B cell (primary cell): ENCODE measurements at regions of chr5 and their contacts with region 1.

Region 1: DNA sequence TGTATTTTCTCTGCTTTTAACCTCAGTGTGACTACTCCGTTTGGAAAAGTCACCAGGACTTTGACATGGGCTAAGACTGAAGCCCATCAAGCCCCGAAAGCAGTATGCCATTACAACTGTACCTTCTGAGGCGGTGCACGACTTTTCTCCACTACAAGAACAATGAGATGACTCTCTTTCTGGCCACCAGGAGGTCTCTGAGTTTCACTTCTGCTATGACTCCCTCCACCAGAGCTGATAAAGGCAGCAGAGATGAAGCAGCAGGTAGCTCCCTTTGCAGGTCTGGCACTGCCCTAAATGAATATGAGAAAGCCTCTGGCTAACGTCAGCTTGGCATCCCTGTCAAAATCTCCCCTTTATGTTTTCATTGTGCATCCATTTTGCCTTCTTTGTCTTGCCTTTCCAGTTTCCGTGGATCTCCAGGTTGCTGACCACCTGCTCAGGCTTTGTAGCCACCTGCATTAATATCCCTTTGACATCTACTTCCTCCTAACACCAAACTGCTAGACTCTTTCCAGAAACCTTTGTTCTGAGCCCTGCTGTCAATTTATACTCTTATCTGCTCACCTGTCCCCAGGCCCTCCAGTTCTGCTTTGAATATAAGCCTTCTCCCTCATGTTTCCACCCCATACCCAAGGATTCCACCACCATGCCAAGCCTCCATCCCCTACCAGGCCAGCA is 221.7 kb downstream of the ZNF608 start:
- DNase-seq: peak; percentile 83
- ATAC-seq: peak; percentile 95
- H3K4me3 ChIP-seq: no peak overlapping the region
- H3K4me3 Mint-ChIP-seq: no peak overlapping the region
- H3K27ac ChIP-seq: no peak overlapping the region
- H3K27ac Mint-ChIP-seq: no peak overlapping the region
- H3K4me1 ChIP-seq: peaks cover 14 to 15% of the 10 kb centered on the region in 2 donors
- H3K4me1 Mint-ChIP-seq: peaks cover 26% of the 10 kb centered on the region
- H3K27me3 ChIP-seq: no peaks in the 10 kb centered on the region
- H3K27me3 Mint-ChIP-seq: peaks cover 4% of the 10 kb centered on the region
- CTCF ChIP-seq: peak; percentile 74

Region 2: DNA sequence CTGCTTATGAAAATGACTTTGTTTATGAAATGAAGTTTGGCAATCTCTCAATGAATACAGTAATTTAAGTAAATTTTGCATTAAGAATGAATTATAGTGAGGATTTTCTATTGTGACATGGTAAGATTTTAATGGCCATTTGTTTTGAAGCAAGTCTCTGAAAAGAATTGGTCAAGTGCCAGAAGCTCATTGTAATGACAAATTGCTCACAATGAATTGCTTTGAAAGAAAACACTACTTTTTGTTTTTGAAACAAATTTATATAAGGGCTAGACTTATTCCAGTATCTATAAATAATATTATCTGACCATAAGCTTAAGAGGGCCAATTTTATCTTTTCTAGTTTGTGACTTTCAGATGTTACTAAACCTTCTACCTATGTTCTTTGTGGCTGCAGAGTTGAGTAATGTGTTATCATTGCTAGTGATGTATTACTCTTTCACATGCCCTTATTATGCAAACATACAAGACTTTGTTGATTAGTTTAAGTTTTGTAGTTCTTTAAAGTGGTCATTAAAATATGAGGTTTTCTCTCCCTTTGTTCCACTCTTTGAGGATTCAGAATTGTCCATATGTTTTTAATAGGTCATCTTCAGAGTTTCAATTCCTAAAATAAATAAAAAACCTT is 314.8 kb after region 1 on chr5:
- CTCF ChIA-PET with region 1: no interaction called
- POLR2A ChIA-PET with region 1: no interaction called
- intact Hi-C with region 1: loop called (anchors 10 kb)
- DNase-seq: no peak
- ATAC-seq: no peak
- H3K4me3 ChIP-seq: no peak overlapping the region
- H3K4me3 Mint-ChIP-seq: no peak overlapping the region
- H3K27ac ChIP-seq: no peak overlapping the region
- H3K27ac Mint-ChIP-seq: no peak overlapping the region
- H3K4me1 ChIP-seq: no peaks in the 10 kb centered on the region
- H3K4me1 Mint-ChIP-seq: no peaks in the 10 kb centered on the region
- H3K27me3 ChIP-seq: no peaks in the 10 kb centered on the region
- H3K27me3 Mint-ChIP-seq: no peaks in the 10 kb centered on the region
- CTCF ChIP-seq: no peak

Region 3: DNA sequence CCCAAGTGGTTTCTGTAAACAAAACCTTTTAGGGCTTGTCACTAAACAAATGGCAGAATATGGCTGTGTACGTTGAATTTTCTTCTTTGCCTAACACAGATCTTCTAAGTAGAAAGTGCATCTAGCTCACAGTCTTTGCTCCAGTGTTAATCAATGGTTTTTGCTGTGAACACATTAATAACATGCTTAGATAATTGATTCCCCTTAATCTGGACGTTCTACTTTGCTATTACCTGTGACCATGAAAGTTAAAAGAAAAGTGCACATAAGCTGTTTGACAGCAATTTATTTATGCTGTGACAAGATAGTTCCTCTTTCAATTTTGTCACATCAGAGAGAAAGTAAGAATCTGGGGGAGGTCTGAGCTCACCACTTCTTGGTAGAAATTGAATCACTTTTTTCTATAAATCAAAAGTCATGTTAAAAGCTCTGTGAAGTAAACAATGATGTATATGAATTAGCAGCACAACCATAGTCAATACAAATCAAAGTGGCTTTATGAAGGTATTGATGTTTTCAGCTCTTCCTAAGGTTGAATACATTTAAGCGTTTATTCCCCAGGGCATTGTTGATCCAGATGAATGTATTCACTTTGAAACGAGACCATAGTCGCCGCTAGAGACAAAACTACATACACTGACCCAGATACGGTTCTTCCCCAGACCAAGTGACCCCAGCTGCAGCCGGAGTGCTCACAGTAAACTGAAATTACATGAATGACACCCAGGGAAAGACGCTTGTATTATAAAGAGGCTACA is 396.4 kb after region 1 on chr5:
- CTCF ChIA-PET with region 1: no interaction called
- POLR2A ChIA-PET with region 1: no interaction called
- intact Hi-C with region 1: loop called (anchors 10 kb)
- DNase-seq: peak; percentile 77
- ATAC-seq: peak; percentile 80
- H3K4me3 ChIP-seq: peak overlapping the region; percentile 2 to 61 (median 36)
- H3K4me3 Mint-ChIP-seq: no peak overlapping the region
- H3K27ac ChIP-seq: peak overlapping the region; percentile 54 to 71
- H3K27ac Mint-ChIP-seq: no peak overlapping the region
- H3K4me1 ChIP-seq: peaks cover 29 to 30% of the 10 kb centered on the region in 2 donors
- H3K4me1 Mint-ChIP-seq: peaks cover 27% of the 10 kb centered on the region
- H3K27me3 ChIP-seq: no peaks in the 10 kb centered on the region
- H3K27me3 Mint-ChIP-seq: no peaks in the 10 kb centered on the region
- CTCF ChIP-seq: no peak

Region 4: GRCh38 chr5:125835293-125836172 is 1310.8 kb after region 1 on chr5:
- CTCF ChIA-PET with region 1: interaction called, 5 read pairs
- POLR2A ChIA-PET with region 1: no interaction called
- intact Hi-C with region 1: loop called (anchors 1 kb)
- DNase-seq: peak; percentile 36
- ATAC-seq: peak; percentile 69
- H3K4me3 ChIP-seq: no peak overlapping the region
- H3K4me3 Mint-ChIP-seq: no peak overlapping the region
- H3K27ac ChIP-seq: no peak overlapping the region
- H3K27ac Mint-ChIP-seq: no peak overlapping the region
- H3K4me1 ChIP-seq: no peaks in the 10 kb centered on the region
- H3K4me1 Mint-ChIP-seq: peaks cover 4% of the 10 kb centered on the region
- H3K27me3 ChIP-seq: peaks cover 0 to 4% (median 0%) of the 10 kb centered on the region in 4 experiments
- H3K27me3 Mint-ChIP-seq: peaks cover 20% of the 10 kb centered on the region
- CTCF ChIP-seq: peak; percentile 70